PC-3 (cell line): ENCODE measurements at regions of chr5 and their contacts with region 1.

Region 1: DNA sequence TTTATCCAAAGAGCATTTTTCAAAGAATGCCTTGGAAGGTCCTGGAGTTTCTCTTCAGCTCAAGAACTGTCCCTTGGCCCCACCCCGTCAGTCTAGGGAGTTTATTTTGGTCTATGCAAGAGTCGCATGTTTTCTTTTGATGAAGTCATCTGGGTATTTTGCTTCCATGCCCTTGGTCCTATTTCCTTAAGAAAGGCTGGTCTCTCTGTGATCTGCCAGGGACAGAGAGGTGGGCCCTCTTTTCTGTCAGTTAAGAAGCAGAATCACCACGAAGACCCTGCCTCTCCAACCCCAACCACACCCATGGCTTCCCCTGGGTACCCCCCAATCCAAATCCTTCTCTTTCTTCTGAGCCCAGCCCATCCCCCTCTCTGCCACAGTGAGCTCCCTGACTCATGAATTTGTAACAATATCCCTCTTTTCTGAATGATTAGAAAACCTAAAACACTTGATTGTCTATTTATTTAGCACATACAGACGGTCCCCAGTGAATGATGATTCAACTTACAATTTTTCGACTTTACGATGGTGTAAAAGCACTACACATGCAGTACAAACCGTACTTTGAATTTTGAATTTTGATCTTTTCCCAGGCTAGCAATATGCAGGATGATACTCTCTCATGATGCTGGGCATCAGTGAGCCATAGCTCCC is 163.5 kb upstream of the ADRA1B start:
- DNase-seq: peak; percentile 74
- ATAC-seq: peak; percentile 71
- H3K4me3 ChIP-seq: peak overlapping the region; percentile 32
- H3K27ac ChIP-seq: peak overlapping the region; percentile 87
- H3K4me1 ChIP-seq: peaks cover 56% of the 10 kb centered on the region
- H3K27me3 ChIP-seq: no peaks in the 10 kb centered on the region
- CTCF ChIP-seq: no peak

Region 2: DNA sequence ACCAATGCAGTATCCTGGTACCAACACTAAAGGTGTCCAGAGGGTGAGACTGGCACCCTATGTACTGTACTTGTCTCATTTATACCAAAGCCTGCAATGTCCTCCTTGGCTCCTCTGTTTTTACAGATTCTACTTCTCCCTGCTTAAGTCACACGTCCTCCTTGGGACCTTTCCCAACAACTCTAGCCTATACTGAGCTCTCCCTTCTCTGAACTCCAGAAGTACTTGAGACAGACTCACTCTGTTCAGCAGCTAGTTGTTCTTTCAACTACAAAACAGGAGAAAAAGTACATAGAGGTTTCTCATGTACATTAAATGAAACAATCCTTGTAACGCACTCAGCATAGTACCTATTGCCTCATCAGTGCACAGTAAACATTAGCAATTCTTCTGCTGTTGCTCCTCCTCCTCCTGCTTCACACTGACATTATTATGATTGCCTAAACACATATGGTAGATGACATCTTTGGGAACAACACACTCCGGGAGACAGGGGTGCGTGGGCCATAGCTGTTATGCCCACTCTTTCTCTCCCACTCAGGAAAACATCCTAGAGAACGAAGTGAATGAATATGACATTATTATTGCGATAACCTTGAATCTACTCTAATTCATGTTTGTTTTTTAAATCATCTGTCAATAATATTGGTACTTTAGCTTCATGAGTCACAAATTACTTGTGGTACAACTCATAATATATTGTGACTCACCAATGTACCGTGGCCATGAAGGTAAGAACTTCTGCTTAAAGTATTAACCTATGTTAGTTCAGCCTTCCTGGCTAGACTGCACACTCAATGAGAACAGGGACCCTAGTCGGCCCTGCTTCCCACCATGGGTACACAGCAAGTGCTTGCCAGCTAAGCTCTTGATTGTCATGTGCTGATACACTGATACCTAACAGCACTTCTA is 16.7 kb before region 1 on chr5:
- CTCF ChIA-PET with region 1: no interaction called
- POLR2A ChIA-PET with region 1: no interaction called
- intact Hi-C with region 1: loop called (anchors 1 kb)
- DNase-seq: peak; percentile 81
- ATAC-seq: peak; percentile 89
- H3K4me3 ChIP-seq: peak overlapping the region; percentile 34; the same call in 1 of the 2 replicates
- H3K27ac ChIP-seq: peak overlapping the region; percentile 62
- H3K4me1 ChIP-seq: peaks cover 23% of the 10 kb centered on the region
- H3K27me3 ChIP-seq: no peaks in the 10 kb centered on the region
- CTCF ChIP-seq: no peak

Region 3: GRCh38 chr5:159905496-159905895 is 152.7 kb after region 1 on chr5:
- CTCF ChIA-PET with region 1: no interaction called
- POLR2A ChIA-PET with region 1: no interaction called
- intact Hi-C with region 1: loop called (anchors 10 kb)
- DNase-seq: peak; percentile 98
- ATAC-seq: peak; percentile 93
- H3K4me3 ChIP-seq: no peak overlapping the region
- H3K27ac ChIP-seq: peak overlapping the region; percentile 87
- H3K4me1 ChIP-seq: peaks cover 63% of the 10 kb centered on the region
- H3K27me3 ChIP-seq: no peaks in the 10 kb centered on the region
- CTCF ChIP-seq: no peak